Panc1 (cell line): ENCODE measurements at regions of chr10 and their contacts with region 1.

Region 1: DNA sequence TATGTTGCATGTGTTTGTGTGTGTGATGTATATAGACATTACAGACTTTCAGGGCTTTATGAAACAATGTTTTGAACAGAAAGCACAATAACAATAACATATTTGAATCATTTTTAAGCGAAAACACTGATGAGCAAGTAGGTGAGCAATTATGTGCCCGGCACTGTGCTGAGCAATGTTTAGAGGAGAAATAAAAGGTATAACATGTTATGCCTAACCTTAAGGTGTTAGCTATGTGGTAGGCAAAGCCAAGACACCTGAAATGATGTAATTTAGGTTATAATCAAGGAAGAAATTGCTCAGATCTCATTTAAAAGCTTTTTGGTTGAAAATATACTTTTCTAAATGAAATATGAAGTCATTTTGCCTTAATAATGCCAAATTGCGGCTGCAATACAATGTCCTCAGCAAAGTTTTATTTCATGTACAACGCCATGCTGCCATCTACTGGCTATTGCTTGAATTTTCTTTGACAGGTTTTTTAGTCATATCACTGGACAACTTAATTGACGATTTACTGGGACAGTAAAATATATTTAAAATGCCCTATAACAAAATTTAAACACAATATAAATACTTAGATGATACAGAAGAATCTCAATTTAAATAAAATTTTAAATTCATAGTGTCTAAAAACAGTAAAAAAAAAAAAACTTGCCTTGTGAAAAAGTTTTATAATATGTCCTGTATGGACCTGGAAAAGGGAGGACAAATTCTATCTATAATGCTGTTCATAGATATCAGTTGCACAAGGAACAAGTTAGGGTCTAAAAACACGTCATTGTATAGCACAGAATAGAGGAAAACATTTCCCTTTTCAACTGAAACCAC is 131.1 kb upstream of the CDK1 start:
- DNase-seq: peak; percentile 42
- ATAC-seq: peak; percentile 76
- H3K4me3 ChIP-seq: no peak overlapping the region
- H3K27ac ChIP-seq: no peak overlapping the region
- H3K4me1 ChIP-seq: no peaks in the 10 kb centered on the region
- H3K27me3 ChIP-seq: no peaks in the 10 kb centered on the region
- CTCF ChIP-seq: peak; percentile 77; the same call in 1 of the 2 replicates

Region 2: GRCh38 chr10:59709395-59710125 is 937.6 kb before region 1 on chr10 and contains the start of gene SLC16A9:
- CTCF ChIA-PET with region 1: interaction called, 10 read pairs
- POLR2A ChIA-PET with region 1: no interaction called
- in situ Hi-C with region 1: no loop called
- intact Hi-C with region 1: no loop called
- DNase-seq: no peak
- ATAC-seq: peak; percentile 88
- H3K4me3 ChIP-seq: peak within 1 kb of the TSS; percentile 49 to 50
- H3K27ac ChIP-seq: no peak within 1 kb of the TSS
- H3K4me1 ChIP-seq: peaks cover 4% of the 10 kb centered on the region; the same call in 1 of the 2 replicates
- H3K27me3 ChIP-seq: peaks cover 37% of the 10 kb centered on the region
- CTCF ChIP-seq: peak; percentile 71
- total RNA-seq, gene SLC16A9: 0.13 TPM

Region 3: GRCh38 chr10:60549686-60550085 is 97.5 kb before region 1 on chr10:
- CTCF ChIA-PET with region 1: interaction called, 5 read pairs
- POLR2A ChIA-PET with region 1: no interaction called
- in situ Hi-C with region 1: no loop called
- intact Hi-C with region 1: loop called (anchors 1 kb)
- DNase-seq: no peak
- ATAC-seq: peak; percentile 84
- H3K4me3 ChIP-seq: no peak overlapping the region
- H3K27ac ChIP-seq: no peak overlapping the region
- H3K4me1 ChIP-seq: no peaks in the 10 kb centered on the region
- H3K27me3 ChIP-seq: no peaks in the 10 kb centered on the region
- CTCF ChIP-seq: peak; percentile 63; the same call in 1 of the 2 replicates

Region 4: GRCh38 chr10:60747817-60748469 is 100.8 kb after region 1 on chr10:
- CTCF ChIA-PET with region 1: no interaction called
- POLR2A ChIA-PET with region 1: no interaction called
- in situ Hi-C with region 1: no loop called
- intact Hi-C with region 1: no loop called
- DNase-seq: no peak
- ATAC-seq: no peak
- H3K4me3 ChIP-seq: no peak overlapping the region
- H3K27ac ChIP-seq: no peak overlapping the region
- H3K4me1 ChIP-seq: no peaks in the 10 kb centered on the region
- H3K27me3 ChIP-seq: peaks cover 16% of the 10 kb centered on the region
- CTCF ChIP-seq: no peak